ENCODE measurements at regions of chr22 and their contacts with region 1.

Region 1: GRCh38 chr22:30289134-30289979 is at the start of gene CASTOR1:
- DNase-seq: peak; percentile 100

Region 2: DNA sequence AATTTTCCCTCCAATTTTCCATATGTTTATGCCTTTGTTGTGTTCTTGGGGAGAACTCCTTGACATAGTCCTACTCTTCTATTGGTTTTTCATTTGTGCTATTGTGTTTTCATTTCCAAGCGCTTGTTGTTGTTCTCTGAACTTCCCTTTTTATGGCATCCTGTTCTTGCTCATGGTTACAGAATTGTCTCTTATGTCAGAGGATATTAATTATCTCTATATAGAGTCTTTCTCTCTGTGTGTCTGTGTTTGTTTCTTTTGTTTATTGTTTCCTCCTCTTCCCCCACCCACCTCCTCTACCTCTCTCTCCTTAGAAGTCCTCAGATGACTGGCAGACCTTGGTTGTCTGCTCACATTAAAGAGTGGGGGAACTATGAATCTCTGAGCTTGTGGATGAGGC is 139.1 kb before region 1 on chr22:
- CTCF ChIA-PET with region 1: no interaction called
- POLR2A ChIA-PET with region 1: no interaction called
- DNase-seq: no peak

Region 3: GRCh38 chr22:30262917-30263741 is 26.2 kb before region 1 on chr22:
- CTCF ChIA-PET with region 1: interaction called, 19 read pairs
- POLR2A ChIA-PET with region 1: no interaction called
- DNase-seq: peak; percentile 90

Region 4: GRCh38 chr22:30326706-30327362 is 37.5 kb after region 1 on chr22 and contains the start of gene TBC1D10A:
- CTCF ChIA-PET with region 1: interaction called, 18 read pairs
- POLR2A ChIA-PET with region 1: interaction called, 10 read pairs
- DNase-seq: peak; percentile 100

Region 5: DNA sequence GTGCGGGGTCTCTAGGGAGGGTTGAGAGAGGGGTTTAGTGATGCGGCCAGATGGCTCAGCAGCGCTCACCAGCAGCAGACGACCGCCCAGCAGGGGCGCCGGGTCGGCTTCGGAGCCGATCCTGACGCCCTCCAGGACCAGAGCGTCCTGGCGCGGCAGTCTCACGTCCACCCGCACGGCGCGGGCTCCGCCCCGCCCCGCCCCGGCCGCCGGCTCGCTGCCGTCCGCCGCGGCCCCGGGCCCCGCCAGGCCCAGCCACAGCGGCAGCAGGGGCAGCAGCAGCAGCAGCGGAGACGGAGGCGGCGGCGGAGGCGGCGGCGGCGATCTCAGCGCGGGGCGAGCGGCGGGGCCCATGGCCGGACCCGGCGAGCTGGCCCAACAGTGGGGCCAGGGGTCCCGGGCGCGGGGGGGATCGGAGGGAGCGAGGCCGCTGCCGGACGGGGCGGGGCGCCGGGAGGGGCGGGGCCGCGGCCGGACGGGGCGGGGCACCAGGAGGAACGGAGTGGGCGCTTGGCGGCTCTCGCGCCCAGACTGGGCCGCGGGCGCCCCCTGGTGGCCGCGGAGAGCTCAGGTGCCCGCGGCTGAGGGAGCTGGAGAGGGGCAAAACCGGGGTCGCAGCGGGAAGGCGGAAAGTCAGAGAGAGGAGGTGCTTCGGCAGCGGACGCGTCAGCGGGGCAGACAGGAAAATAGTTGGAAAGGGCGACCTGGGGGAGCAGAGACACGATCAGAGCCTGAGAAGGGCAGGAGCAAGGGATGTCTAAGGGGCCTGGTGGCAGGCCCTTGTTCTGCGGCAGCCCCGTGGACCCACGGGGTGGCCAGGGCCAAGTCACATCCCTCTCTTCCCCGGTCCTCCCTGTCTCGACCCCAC is 97.8 kb after region 1 on chr22 and contains the start of gene RNF215:
- CTCF ChIA-PET with region 1: interaction called, 24 read pairs
- POLR2A ChIA-PET with region 1: interaction called, 4 read pairs
- DNase-seq: peak; percentile 99

Region 6: DNA sequence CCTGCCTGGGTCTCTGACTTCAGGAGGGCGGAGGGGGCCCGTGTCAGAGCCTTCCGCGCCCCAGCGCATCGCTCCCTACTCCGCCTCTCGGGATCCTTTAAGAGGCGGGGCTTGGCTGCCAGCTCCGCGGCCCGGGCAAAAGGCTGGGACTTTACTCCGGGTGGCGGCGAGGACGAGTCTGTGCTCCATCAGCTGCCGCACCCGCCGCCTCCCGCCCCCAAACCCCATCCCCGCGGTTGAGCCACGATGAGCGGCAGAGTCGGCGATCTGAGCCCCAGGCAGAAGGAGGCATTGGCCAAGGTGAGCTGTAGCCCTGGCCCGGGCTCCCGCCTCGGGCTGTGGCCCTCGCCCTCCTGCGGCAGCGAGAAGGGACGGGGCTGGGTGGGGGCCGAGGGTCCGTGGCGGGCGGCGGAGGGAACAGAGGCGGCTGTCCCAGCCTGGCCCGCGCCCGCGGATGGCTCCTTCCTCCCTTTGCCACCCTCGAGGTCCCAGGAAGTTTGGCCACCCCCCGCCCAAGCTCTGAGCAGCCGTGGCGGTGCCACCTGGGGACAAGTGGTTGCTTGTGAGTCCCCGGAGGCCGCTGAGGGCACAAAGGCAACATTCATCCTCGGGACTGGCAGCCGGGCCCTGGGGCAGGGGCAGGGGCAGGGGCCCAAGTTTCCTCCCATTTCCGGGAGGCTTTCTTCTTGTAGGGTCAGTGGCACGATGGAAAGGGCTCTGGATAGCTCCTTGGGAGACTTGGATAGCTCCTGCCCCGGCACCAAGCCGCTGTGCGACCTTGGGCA is 107.7 kb after region 1 on chr22 and contains the start of gene SEC14L2:
- CTCF ChIA-PET with region 1: interaction called, 15 read pairs
- POLR2A ChIA-PET with region 1: interaction called, 6 read pairs
- DNase-seq: peak; percentile 74

Measured in HEK293T (cell line).